Activated B cell treated with CpG ODN at 0.5 μM for 24 hours (primary cell): ENCODE measurements at regions of chr18 and their contacts with region 1.

Region 1: GRCh38 chr18:35646449-35646848 is 64.9 kb downstream of the GALNT1 start:
- DNase-seq: no peak
- ATAC-seq: no peak
- H3K4me3 Mint-ChIP-seq: no peak overlapping the region
- H3K27ac Mint-ChIP-seq: no peak overlapping the region
- H3K4me1 Mint-ChIP-seq: peaks cover 13% of the 10 kb centered on the region
- H3K27me3 Mint-ChIP-seq: no peaks in the 10 kb centered on the region
- CTCF ChIP-seq: no peak

Region 2: DNA sequence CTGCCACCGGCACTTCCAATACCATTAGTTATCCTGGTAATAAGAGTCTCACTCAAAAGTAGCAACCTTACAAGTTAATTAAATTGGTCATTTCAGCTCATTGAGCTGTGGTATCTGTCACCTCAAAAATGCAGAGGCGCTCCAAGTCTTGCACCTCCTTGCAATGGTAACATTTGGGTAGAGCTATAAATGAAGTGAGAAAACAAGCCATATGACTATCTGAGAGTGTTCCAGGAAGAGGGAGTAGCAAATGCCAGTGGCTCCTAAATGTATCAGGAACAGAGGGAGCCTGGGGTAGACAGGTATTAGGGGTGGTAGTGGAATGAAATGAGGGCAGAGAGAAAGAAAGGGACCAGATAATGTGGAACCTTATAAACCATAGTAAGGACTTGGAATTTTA is 350.4 kb before region 1 on chr18:
- CTCF ChIA-PET with region 1: no interaction called
- POLR2A ChIA-PET with region 1: no interaction called
- intact Hi-C with region 1: no loop called
- DNase-seq: no peak
- ATAC-seq: no peak
- H3K4me3 Mint-ChIP-seq: no peak overlapping the region
- H3K27ac Mint-ChIP-seq: no peak overlapping the region
- H3K4me1 Mint-ChIP-seq: peaks cover 20% of the 10 kb centered on the region
- H3K27me3 Mint-ChIP-seq: no peaks in the 10 kb centered on the region
- CTCF ChIP-seq: no peak

Region 3: DNA sequence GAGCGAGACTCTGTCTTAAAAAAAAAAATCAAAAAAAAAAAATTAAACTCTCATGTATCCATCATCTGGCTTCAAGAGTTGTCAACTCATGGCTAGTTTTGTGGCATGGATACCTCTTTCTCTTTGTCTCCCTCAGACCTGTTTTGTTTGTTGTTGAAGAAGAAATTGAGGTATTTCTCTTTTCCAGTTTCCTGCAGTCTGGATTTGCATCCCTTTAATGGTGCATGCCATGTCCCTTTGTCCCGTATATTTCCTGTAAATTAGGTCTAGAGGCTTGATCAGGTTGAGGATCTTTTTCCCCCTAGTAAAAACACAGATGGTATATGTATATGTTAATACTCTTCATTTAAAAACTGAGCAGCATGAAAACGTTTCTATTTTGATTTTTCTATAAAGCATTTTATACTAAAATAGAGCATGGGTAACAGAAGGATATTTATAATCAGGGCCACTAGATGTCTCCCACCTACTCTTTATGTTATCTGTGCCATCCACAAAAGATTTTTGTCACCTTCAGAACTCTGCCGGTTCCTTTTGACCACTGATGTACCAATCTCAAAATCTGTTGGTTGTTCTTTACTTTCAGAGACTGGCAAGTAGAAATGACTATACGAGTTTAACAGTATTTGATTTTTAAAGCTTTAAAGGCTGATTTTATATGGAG is 15.2 kb after region 1 on chr18:
- CTCF ChIA-PET with region 1: no interaction called
- POLR2A ChIA-PET with region 1: no interaction called
- intact Hi-C with region 1: loop called (anchors 2 kb)
- DNase-seq: no peak
- ATAC-seq: no peak
- H3K4me3 Mint-ChIP-seq: no peak overlapping the region
- H3K27ac Mint-ChIP-seq: no peak overlapping the region
- H3K4me1 Mint-ChIP-seq: peaks cover 19% of the 10 kb centered on the region
- H3K27me3 Mint-ChIP-seq: no peaks in the 10 kb centered on the region
- CTCF ChIP-seq: no peak